ENCODE measurements at regions of chr9 and their contacts with region 1.

Region 1: DNA sequence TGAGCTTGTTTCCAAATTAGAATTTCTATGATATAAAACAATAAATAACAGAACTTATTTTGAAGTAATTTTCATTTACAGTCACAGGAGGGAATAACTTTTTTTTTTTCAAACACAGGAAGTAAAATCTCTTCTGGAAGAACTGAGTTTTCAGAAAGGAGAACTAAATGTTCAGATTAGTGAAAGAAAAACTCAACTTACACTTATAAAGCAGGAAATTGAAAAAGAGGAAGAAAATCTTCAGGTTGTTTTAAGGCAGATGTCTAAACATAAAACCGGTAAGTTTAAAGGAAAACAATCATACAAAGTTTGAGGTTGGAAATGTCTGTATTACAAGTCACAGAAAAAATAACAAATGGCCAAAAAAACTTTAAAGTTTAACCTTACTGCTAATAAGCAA is 41.6 kb downstream of the RAB14 start:
- DNase-seq: no peak
- H3K4me3 ChIP-seq: no peak overlapping the region
- H3K27me3 ChIP-seq: no peaks in the 10 kb centered on the region
- CTCF ChIP-seq: no peak

Region 2: DNA sequence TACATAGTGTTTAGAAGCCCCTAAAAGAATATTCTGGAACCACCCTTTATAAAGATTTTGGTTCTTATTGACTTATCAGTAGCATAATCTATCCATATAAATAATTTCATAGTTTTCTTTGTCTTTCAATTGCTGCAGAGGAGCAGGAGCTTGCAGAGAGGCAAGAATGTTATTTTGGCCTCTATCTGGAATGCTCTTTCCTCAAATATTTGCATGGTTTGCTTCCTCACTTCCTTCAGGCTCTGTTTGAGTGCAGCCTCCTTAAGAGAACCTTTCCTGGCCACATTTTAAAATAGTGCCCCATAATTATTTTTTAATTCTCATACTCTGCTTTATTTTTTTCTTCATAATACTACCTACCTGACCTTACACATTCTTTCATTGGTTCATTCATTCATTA is 111.4 kb before region 1 on chr9:
- CTCF ChIA-PET with region 1: no interaction called
- POLR2A ChIA-PET with region 1: interaction called, 10 read pairs
- DNase-seq: no peak
- H3K4me3 ChIP-seq: no peak overlapping the region
- H3K27me3 ChIP-seq: no peaks in the 10 kb centered on the region
- CTCF ChIP-seq: no peak

Measured in BJ (cell line).